Activated CD4-positive, alpha-beta memory T cell treated with anti-CD3 and anti-CD28 coated beads for 36 hours (primary cell): ENCODE measurements at regions of chr9 and their contacts with region 1.

Region 1: DNA sequence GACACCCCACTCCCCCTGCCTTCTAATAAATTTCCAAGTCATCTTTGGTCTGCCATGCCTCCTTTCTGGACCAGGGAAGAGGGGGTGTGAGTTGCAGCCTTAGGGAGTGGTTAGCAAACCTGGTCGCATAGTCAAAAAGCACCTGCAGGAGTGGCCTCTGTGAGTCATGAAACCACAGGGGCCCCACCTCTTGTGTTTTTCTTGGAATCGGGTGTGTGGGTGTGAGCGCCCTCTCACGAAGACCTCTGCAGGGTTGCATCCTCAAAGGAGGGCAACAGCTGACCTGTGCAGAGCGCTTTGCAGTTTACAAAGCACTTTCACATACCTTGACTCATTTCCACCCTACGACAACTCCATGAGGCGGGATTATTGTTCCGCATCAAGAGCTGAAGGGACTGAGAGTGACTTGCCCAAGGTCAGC is 36.8 kb upstream of the TEX48 start:
- DNase-seq: peak; percentile 97
- H3K4me3 Mint-ChIP-seq: peak overlapping the region; percentile 17
- H3K27ac Mint-ChIP-seq: peak overlapping the region; percentile 80
- H3K4me1 Mint-ChIP-seq: peaks cover 63% of the 10 kb centered on the region
- H3K27me3 Mint-ChIP-seq: no peaks in the 10 kb centered on the region

Region 2: DNA sequence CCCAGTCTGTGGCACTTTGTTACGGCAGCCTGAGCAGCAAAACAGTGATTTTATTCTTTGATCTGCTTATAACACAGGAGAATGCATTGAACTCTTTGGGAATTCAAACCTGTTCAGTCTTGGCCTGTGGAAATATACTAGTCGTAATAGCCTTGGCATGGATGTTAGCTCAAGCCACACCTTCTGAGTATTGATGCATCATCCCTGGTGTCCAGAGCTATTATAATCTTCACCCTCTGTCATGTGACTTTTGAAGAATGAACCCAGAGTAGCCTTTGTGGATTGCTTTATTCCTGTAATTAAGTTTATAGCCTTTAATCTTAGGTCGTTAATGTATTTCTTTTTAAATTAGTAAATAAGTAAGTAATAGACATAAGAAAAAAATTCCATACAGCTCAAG is 14.0 kb after region 1 on chr9:
- CTCF ChIA-PET with region 1: interaction called, 8 read pairs
- POLR2A ChIA-PET with region 1: interaction called, 3 read pairs
- intact Hi-C with region 1: loop called (anchors 1 kb)
- DNase-seq: no peak
- H3K4me3 Mint-ChIP-seq: no peak overlapping the region
- H3K27ac Mint-ChIP-seq: no peak overlapping the region
- H3K4me1 Mint-ChIP-seq: peaks cover 42% of the 10 kb centered on the region
- H3K27me3 Mint-ChIP-seq: no peaks in the 10 kb centered on the region